PC-9 (cell line): ENCODE measurements at regions of chr18 and their contacts with region 1.

Region 1: GRCh38 chr18:22074282-22075069 is 94.9 kb upstream of the GATA6 start:
- DNase-seq: no peak
- H3K4me3 ChIP-seq: no peak overlapping the region
- H3K27ac ChIP-seq: no peak overlapping the region
- H3K4me1 ChIP-seq: no peaks in the 10 kb centered on the region
- H3K27me3 ChIP-seq: no peaks in the 10 kb centered on the region
- CTCF ChIP-seq: no peak

Region 2: GRCh38 chr18:22169007-22169864 is 94.8 kb after region 1 on chr18 and contains the start of gene GATA6:
- CTCF ChIA-PET with region 1: no interaction called
- POLR2A ChIA-PET with region 1: no interaction called
- intact Hi-C with region 1: no loop called
- DNase-seq: peak; percentile 77 to 84
- H3K4me3 ChIP-seq: peak within 1 kb of the TSS; percentile 73
- H3K27ac ChIP-seq: peak within 1 kb of the TSS; percentile 74
- H3K4me1 ChIP-seq: peaks cover 22% of the 10 kb centered on the region
- H3K27me3 ChIP-seq: no peaks in the 10 kb centered on the region
- CTCF ChIP-seq: peak; percentile 45; the same call in 1 of the 2 replicates
- total RNA-seq, gene GATA6: 9.1 and 12.3 TPM in 2 replicates

Region 3: GRCh38 chr18:22521026-22521707 is 446.7 kb after region 1 on chr18:
- CTCF ChIA-PET with region 1: interaction called, 11 read pairs
- POLR2A ChIA-PET with region 1: no interaction called
- intact Hi-C with region 1: no loop called
- DNase-seq: no peak
- H3K4me3 ChIP-seq: no peak overlapping the region
- H3K27ac ChIP-seq: no peak overlapping the region
- H3K4me1 ChIP-seq: no peaks in the 10 kb centered on the region
- H3K27me3 ChIP-seq: no peaks in the 10 kb centered on the region
- CTCF ChIP-seq: no peak